ENCODE measurements at regions of chr4 and their contacts with region 1.

Region 1: DNA sequence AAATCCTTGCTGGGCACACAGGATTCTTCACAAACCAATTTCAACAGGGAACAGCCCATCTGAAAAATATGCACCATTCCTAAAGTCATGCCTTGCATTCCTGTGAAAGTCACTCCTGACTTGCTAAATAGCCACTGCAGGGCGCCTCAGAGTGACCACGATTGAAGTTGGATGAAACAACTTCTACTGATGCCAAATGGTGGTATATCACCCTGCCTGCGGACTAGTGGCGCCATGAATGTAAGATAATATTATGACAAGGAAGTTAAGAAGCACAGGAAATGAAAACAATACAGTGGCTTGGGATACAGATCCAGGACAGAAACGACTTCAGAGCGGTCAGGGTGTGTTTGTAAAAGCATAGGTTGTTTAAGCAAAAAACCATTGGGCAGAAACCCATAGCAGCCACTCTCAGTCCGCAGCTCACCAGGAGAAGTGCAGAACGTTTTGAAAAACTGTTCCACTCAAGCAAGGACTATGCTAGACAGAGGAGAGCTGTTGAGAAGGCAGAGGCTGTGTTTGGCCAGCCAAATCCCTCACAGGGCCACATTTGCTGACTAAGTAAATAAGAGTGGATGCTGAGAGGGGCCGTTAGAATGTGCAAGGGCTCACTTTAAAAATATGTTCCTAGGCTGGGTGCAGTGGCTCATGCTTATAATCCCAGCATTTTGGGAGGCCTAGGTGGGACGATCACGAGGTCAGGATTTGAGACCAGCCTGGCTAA is 250.4 kb downstream of the PTTG2 start:
- DNase-seq: peak in 1 of 2 donors; percentile 68
- H3K4me3 ChIP-seq: no peak overlapping the region
- H3K27ac ChIP-seq: peak overlapping the region; percentile 71 to 77
- H3K4me1 ChIP-seq: peaks cover 6 to 32% (median 24%) of the 10 kb centered on the region in 4 donors
- H3K27me3 ChIP-seq: no peaks in the 10 kb centered on the region
- CTCF ChIP-seq: no peak

Region 2: DNA sequence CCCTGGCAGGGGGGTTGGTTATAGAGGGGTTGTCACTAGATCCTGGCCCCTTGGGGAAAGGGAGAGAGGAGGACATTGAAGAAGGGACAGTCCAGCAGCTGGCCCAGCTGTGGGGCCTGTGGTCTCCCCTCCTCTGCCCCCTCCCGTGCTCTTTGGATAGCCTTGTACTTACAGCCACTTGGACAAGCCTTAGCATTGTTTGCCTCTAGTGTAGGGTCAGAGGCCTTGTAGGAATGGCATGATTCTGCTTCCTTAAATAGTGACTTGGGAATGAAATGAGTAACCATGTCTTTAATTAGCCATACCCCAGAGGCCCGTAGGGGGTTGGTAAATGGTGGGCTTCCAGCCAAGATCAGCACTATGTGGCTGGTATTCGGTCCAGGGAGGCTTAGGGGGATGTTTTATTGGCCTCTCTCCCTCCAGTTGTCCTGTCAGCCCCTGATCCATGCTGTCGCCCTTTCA is 19.8 kb before region 1 on chr4:
- intact Hi-C with region 1: loop called (anchors 2 kb)
- DNase-seq: peak; percentile 34 to 87
- H3K4me3 ChIP-seq: no peak overlapping the region
- H3K27ac ChIP-seq: peak overlapping the region; percentile 67 to 75
- H3K4me1 ChIP-seq: peaks cover 0 to 43% (median 35%) of the 10 kb centered on the region in 4 donors
- H3K27me3 ChIP-seq: no peaks in the 10 kb centered on the region
- CTCF ChIP-seq: peak in 1 of 2 experiments; percentile 16

Region 3: DNA sequence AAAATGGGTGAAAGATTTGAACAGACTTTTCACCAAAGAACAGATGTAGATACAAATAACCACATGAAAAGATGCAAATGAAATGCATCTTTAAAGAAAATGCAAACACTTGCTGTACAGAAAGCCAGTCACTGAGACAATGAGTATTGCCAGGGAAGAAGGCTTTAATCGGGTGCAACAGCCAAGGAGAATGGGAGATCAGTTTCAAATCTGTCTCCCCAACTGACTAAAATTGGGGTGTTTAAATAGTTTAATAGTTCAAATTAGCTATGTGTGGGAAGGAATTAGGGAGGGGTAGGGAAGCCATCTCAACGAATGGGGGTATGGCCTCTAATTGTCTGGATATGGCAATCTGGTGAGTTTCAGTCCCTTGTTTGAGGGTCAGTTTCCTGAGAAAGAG is 45.0 kb after region 1 on chr4:
- intact Hi-C with region 1: no loop called
- DNase-seq: no peak
- H3K4me3 ChIP-seq: no peak overlapping the region
- H3K27ac ChIP-seq: no peak overlapping the region
- H3K4me1 ChIP-seq: no peaks in the 10 kb centered on the region
- H3K27me3 ChIP-seq: no peaks in the 10 kb centered on the region
- CTCF ChIP-seq: no peak

Measured in tibial artery (tissue), 4 donors.